ENCODE measurements at regions of chr20 and their contacts with region 1.

Region 1: GRCh38 chr20:47389867-47390347 is 33.4 kb upstream of the ZMYND8 start:
- DNase-seq: no peak
- ATAC-seq: no peak
- H3K4me3 ChIP-seq: no peak overlapping the region
- H3K27ac ChIP-seq: no peak overlapping the region
- H3K4me1 ChIP-seq: no peaks in the 10 kb centered on the region
- H3K27me3 ChIP-seq: no peaks in the 10 kb centered on the region
- CTCF ChIP-seq: no peak
- POLR2A ChIP-seq: no peak

Region 2: GRCh38 chr20:47205577-47206498 is 184.1 kb before region 1 on chr20:
- intact Hi-C with region 1: loop called in 1 of 2 experiments (anchors 10 kb)
- DNase-seq: peak; percentile 70 to 80 (median 76)
- ATAC-seq: peak; percentile 88 to 93 (median 92)
- H3K4me3 ChIP-seq: no peak overlapping the region
- H3K27ac ChIP-seq: no peak overlapping the region
- H3K4me1 ChIP-seq: peaks cover 0 to 4% (median 0%) of the 10 kb centered on the region in 4 donors
- H3K27me3 ChIP-seq: no peaks in the 10 kb centered on the region
- CTCF ChIP-seq: peak; percentile 60 to 99 (median 74)
- POLR2A ChIP-seq: no peak

Region 3: GRCh38 chr20:47272893-47273590 is 116.9 kb before region 1 on chr20:
- intact Hi-C with region 1: loop called in 1 of 2 experiments (anchors 10 kb)
- DNase-seq: peak in 1 of 3 donors; percentile 56
- ATAC-seq: peak; percentile 84 to 95 (median 90)
- H3K4me3 ChIP-seq: no peak overlapping the region
- H3K27ac ChIP-seq: peak overlapping the region in 1 of 3 donors; percentile 41
- H3K4me1 ChIP-seq: peaks cover 0 to 11% (median 2%) of the 10 kb centered on the region in 4 donors
- H3K27me3 ChIP-seq: no peaks in the 10 kb centered on the region
- CTCF ChIP-seq: peak; percentile 85 to 96 (median 86)
- POLR2A ChIP-seq: no peak

Region 4: DNA sequence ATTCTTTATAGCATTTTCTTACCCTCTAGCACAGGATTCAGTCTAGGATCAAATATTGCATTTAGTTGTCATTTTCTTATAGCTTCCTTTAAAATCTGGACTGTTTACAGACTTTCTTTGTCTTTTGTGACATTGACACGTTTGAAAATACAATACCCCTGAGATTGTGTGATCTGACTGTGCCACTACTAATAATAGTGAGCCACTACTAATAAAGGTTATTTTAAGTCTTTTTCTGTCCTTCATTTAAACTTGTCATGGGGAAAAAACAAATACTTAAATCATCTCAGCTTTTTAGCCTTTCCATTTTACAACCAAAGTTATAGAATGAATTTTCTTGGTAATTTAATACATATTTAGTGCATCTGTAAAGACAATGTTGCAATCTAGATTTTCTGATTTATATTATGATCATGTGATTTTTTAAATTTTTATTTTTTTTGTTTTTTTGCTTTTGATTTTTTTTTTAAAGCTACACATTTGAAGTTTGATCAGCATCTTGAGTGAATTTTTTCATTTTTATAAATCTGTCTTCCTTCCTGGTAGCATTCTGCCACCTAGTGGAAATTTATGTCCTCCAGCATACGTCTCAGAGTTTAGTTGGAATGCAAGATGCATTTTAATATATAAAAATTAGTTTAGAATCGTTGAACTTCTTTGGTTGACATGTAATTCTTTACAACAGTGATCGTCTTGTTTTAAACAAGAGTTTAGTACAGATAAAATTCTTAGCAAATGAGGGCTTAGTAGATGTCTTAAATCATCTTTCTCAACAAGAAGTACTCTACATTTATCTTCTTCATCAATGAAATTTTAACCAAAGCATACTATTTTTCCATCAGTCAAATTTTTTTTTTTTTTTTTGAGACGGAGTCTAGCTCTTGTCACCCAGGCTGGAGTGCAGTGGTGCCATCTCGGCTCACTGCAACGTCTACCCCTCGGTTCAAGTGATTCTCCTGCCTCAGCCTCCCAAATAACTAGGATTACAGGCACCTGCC is 231.2 kb after region 1 on chr20:
- intact Hi-C with region 1: loop called in 1 of 2 experiments (anchors 10 kb)
- DNase-seq: no peak
- ATAC-seq: peak; percentile 34 to 56 (median 48)
- H3K4me3 ChIP-seq: no peak overlapping the region
- H3K27ac ChIP-seq: no peak overlapping the region
- H3K4me1 ChIP-seq: no peaks in the 10 kb centered on the region
- H3K27me3 ChIP-seq: no peaks in the 10 kb centered on the region
- CTCF ChIP-seq: peak; percentile 76 to 88 (median 86)
- POLR2A ChIP-seq: no peak

Region 5: DNA sequence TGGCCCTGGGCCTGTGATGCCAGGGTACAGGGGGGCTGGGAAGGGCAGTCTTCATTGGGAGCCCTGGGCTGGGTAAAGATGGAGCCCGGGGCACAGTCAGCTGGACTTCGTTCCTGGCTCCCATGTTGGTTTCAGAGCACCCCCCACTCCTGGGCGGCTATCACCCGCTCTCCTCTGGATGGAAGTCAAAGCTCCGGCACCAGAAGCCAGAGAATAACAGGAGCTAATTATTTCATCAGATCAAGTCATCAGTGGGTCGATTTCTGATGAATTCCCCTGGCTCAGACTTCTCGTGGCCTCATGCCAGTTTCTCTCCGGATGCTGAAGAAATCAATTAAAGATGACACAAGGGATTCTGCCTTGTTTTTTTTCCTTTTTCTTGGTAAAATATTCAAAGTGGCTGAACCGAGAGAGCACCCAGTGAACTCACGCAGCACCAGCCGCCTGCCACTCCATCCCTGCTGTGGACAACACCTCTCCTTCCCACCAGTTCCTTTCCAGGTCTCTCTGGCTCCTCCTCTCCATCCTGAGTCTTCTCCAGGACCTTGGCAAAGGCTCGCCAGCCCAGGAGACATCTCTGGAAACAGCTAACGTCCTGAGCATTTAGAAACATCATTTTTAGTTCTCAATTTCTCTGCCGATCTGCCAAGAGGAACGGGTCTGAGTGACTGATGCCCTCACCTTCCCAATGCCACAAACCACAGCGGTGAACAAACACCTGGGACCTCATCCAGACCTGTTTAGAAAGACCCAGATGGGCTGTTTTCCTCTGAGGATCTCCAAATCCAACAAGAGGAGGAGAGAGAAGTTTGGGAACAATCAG is 373.0 kb after region 1 on chr20:
- intact Hi-C with region 1: no loop called
- DNase-seq: peak in 1 of 3 donors; percentile 33
- ATAC-seq: peak in 3 of 4 donors; percentile 22 to 60 (median 59)
- H3K4me3 ChIP-seq: no peak overlapping the region
- H3K27ac ChIP-seq: no peak overlapping the region
- H3K4me1 ChIP-seq: no peaks in the 10 kb centered on the region
- H3K27me3 ChIP-seq: no peaks in the 10 kb centered on the region
- CTCF ChIP-seq: no peak
- POLR2A ChIP-seq: no peak